GM23248 (cell line): ENCODE measurements at regions of chr5 and their contacts with region 1.

Region 1: GRCh38 chr5:90434116-90434714 is 24.7 kb upstream of the CETN3 start:
- DNase-seq: peak; percentile 51
- H3K4me3 ChIP-seq: no peak overlapping the region
- H3K27ac ChIP-seq: no peak overlapping the region
- H3K4me1 ChIP-seq: no peaks in the 10 kb centered on the region
- H3K27me3 ChIP-seq: no peaks in the 10 kb centered on the region

Region 2: DNA sequence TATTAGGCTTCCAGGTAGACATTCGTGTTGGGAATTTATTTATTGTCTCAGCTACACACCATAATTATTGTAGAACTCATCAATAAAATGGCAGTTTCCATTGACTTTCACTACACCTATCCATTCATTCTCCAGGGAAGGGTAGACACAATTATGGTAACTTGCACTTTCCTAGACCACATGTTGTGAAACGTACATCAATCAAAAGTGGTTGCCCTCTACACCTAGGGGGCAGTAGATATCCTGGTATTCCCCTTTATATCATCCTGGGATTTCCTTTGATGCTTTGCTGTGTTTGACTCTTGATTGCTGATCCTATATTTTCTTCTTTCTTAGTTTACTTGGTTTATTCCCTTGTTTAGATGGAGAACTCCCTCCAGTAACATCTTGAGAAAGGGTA is 172.3 kb after region 1 on chr5:
- in situ Hi-C with region 1: loop called (anchors 10 kb)
- DNase-seq: no peak
- H3K4me3 ChIP-seq: no peak overlapping the region
- H3K27ac ChIP-seq: no peak overlapping the region
- H3K4me1 ChIP-seq: no peaks in the 10 kb centered on the region
- H3K27me3 ChIP-seq: no peaks in the 10 kb centered on the region

Region 3: GRCh38 chr5:90783460-90784333 is 349.5 kb after region 1 on chr5:
- in situ Hi-C with region 1: loop called (anchors 25 kb)
- DNase-seq: peak; percentile 64
- H3K4me3 ChIP-seq: no peak overlapping the region
- H3K27ac ChIP-seq: no peak overlapping the region
- H3K4me1 ChIP-seq: no peaks in the 10 kb centered on the region
- H3K27me3 ChIP-seq: no peaks in the 10 kb centered on the region